ENCODE measurements at regions of chr2 and their contacts with region 1.

Region 1: DNA sequence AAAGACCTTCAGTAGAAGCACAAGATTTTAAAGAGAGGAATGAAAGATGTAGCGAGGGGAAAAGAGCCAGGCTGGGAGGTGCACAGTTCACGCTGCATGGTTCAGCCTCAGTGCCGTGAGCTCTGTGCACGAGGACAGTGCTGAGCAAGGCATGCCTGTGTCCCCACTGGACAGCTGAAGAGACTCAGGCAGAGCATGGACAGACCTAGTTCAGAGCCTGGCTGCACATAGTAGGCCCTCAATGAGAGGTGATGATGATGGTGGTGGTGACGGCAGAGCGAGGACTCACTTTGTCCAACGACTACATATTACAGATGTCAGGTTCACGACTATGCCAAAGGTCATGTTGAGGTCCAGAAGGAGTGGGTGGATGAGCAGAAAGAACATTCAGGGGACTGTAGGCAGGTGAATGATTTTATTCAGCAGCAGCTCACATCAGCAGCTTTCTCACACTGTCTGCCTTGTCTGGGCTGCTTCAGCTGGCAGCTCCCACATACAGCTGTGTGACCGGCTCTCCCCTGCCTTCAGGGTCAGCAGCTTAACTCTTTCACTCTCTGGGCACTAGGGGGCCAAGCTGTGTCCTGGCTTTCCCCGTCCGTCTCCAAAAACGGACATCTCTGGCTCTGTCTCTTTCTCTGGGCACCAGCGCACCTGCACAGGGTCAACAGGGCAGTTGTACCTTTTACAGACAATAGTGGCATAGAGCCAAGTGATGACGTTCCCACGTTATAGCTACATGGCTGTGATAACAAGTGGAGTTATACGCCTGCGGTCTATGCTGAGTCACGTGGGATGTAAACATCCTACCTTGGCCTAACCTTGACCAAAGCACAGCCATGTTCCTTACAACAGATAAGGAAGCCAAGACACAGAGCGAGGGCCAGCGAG is 128.8 kb upstream of the MSH6 start:
- DNase-seq: no peak
- CTCF ChIP-seq: peak; percentile 34

Region 2: DNA sequence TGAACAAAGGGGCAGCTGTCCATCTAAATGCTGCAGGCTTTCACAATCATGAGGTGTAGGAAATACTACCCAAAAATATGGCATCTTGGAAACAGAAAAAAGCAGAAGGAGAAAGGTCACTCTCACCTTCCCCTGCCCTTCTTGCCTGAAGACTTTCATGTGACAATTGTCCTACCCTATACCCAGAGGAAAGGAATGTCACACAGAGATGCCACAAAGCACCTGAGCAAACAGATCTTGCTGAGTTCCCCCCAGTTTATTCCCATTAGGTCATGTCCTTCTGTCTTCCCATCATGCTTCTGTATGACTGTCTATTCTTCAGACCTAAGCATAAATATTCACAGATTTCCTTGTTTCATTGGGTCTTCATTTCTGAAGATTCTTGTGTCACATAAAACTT is 12.2 kb after region 1 on chr2:
- CTCF ChIA-PET with region 1: interaction called, 14 read pairs
- POLR2A ChIA-PET with region 1: no interaction called
- DNase-seq: no peak
- CTCF ChIP-seq: no peak